ENCODE measurements at regions of chr3 and their contacts with region 1.

Region 1: GRCh38 chr3:52197842-52198668 is at the start of gene ALAS1:
- DNase-seq: peak; percentile 94
- H3K4me3 Mint-ChIP-seq: peak within 1 kb of the TSS; percentile 99
- H3K27ac Mint-ChIP-seq: peak within 1 kb of the TSS; percentile 88
- H3K4me1 Mint-ChIP-seq: peaks cover 48% of the 10 kb centered on the region
- H3K27me3 Mint-ChIP-seq: no peaks in the 10 kb centered on the region
- total RNA-seq, gene ALAS1: 117 and 123 TPM in 2 replicates

Region 2: GRCh38 chr3:51995346-51996163 is 202.5 kb before region 1 on chr3 and contains the start of gene RPL29:
- intact Hi-C with region 1: loop called (anchors 5 kb)
- DNase-seq: peak; percentile 90
- H3K4me3 Mint-ChIP-seq: peak within 1 kb of the TSS; percentile 100
- H3K27ac Mint-ChIP-seq: peak within 1 kb of the TSS; percentile 100
- H3K4me1 Mint-ChIP-seq: peaks cover 25% of the 10 kb centered on the region
- H3K27me3 Mint-ChIP-seq: peaks cover 16% of the 10 kb centered on the region
- total RNA-seq, gene RPL29: 1,666 and 1,693 TPM in 2 replicates

Region 3: DNA sequence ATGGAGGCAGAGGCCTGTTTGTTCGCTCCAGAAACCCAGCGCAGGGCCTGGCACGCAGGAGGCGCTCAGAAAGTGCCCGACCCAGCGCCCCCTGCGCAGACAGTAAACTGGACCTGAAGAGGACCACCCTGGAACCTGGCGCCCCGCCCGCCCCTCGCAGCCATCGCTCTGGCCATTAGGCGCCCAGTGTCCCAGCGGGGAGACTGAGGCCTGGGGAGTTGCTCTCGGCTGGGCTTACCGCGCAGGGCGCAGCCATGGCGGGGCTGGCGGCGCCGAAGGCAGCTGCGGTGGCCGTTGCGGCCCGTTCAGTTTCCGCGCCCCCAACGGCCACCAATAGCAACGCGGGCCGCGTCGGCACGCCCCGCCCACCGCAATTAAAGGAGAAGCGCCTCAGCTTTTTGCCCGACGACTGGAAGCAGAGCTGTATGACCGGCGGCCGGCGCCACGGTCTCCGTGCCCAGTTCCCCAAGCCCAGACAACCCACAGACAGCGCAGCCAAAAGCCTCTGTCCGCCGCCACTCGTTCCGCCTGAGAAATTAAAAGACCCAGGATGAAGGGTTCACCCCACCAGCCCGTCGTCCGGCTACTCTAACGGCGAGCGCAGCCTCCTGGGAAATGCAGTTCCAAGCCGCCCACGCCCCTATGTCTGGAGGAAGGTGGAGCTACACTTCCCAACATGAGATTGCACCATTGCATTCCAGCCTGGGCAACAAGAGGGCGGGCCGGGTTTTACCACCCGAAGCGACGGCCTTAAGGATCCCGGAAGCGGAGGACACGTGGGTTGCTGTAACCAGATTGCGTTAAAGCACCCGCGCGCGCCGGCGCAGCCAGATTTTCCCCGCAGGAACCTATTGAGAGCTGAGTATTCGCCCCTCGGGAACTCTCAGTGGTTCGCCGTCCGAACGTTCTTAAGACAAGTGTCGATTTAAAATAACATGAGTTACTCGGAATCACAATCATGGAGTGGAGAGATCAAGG is 43.6 kb before region 1 on chr3 and contains the start of gene POC1A:
- intact Hi-C with region 1: loop called (anchors 1 kb)
- DNase-seq: peak; percentile 88
- H3K4me3 Mint-ChIP-seq: peak within 1 kb of the TSS; percentile 90
- H3K27ac Mint-ChIP-seq: peak within 1 kb of the TSS; percentile 92
- H3K4me1 Mint-ChIP-seq: peaks cover 16% of the 10 kb centered on the region
- H3K27me3 Mint-ChIP-seq: peaks cover under 1% of the 10 kb centered on the region
- total RNA-seq, gene POC1A: 20.4 and 22.2 TPM in 2 replicates

Region 4: GRCh38 chr3:52220380-52221026 is 22.4 kb after region 1 on chr3:
- intact Hi-C with region 1: loop called (anchors 2 kb)
- DNase-seq: peak; percentile 77
- H3K4me3 Mint-ChIP-seq: peak overlapping the region; percentile 15
- H3K27ac Mint-ChIP-seq: no peak overlapping the region
- H3K4me1 Mint-ChIP-seq: peaks cover 57% of the 10 kb centered on the region
- H3K27me3 Mint-ChIP-seq: no peaks in the 10 kb centered on the region

Region 5: GRCh38 chr3:52333869-52334557 is 136.0 kb after region 1 on chr3:
- intact Hi-C with region 1: no loop called
- DNase-seq: no peak
- H3K4me3 Mint-ChIP-seq: no peak overlapping the region
- H3K27ac Mint-ChIP-seq: no peak overlapping the region
- H3K4me1 Mint-ChIP-seq: no peaks in the 10 kb centered on the region
- H3K27me3 Mint-ChIP-seq: no peaks in the 10 kb centered on the region

Measured in activated T-helper 2 cell treated with anti-CD3 and anti-CD28 coated beads, Interferon-gamma antibody, Interleukin-2, Interleukin-4, amounts not matched to agents 10 μg/mL and 5 μg/mL and 100 μg/mL, durations not matched to agents 14 hours and 24 hours and 36 hours (primary cell).